Sciatic nerve (tissue), 2 donors: ENCODE measurements at regions of chr4 and their contacts with region 1.

Region 1: DNA sequence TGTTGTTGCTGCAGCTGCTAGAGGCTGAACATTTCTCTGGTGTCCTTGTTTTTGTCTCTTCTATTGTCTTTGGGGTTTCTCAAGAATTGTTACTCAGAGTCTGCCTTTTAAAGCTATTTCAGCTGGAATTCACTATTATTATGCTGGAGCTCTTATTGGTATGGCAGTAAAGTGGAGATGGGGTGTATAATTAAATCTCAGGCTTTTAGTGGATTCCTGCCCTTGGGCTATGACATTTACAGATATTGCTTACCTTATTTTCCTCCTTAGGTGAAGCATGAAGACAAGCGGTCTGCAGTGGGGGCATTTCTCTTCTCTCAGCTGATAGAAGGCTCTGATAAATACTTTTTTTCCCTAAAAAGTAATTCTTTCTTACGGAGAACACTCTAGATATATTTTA is 1656.6 kb upstream of the IGFBP7 start:
- DNase-seq: no peak
- ATAC-seq: no peak

Region 2: GRCh38 chr4:57971261-57971660 is 795.5 kb before region 1 on chr4:
- intact Hi-C with region 1: no loop called
- DNase-seq: no peak
- ATAC-seq: no peak

Region 3: GRCh38 chr4:58611012-58611411 is 155.7 kb before region 1 on chr4:
- intact Hi-C with region 1: no loop called
- DNase-seq: no peak
- ATAC-seq: no peak

Region 4: GRCh38 chr4:60216752-60217151 is 1450.0 kb after region 1 on chr4:
- intact Hi-C with region 1: loop called (anchors 5 kb)
- DNase-seq: no peak
- ATAC-seq: no peak